Activated CD4-positive, alpha-beta memory T cell treated with anti-CD3 and anti-CD28 coated beads, Interleukin-2, amount 10 ng/mL, durations not matched to agents 7 days and 5 days (primary cell): ENCODE measurements at regions of chr11 and their contacts with region 1.

Region 1: DNA sequence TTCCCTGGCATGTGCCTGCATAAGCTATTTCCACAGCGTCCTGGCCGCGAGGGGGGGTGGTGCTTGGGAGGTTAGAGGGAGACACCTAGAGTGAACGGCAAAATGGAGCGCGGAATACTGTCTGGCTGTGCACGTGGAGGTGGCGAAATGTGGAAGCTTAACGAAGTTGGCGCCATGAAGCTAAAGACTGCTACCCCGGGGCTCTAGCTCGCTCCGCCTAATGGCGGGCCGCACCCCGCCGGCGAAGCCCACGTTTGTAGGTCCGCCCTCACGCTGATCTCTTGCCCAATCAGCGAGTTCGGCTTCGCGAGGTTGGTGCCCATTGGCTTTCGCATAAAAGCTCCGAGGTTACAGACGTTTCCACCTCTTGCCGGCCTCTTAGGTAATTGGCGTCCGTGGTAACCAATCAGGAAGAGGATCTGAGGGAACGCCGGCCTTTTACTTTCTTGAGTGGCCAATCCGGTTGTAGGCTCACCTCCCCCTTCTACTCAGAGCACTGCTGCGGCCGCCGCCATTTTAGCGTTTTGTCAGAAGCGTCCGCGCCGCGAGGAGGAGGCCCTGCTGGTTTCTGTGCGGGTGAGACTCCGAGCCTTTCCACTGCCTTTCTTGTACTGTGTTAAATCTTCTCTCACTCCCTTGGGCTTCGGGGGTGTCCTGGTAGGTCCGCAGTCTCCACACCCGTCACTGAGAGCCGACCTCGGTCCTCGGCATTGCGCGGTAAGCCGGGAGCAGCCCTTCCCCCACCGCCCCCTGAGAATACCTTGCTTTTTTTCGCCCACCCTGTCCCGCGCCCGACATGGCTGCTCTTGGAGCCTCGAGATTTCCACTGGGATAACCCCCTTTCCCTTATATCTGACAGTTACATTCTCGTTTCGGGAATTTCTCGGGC is at the start of gene RBM4:
- DNase-seq: peak; percentile 98
- H3K4me3 Mint-ChIP-seq: peak within 1 kb of the TSS; percentile 91
- H3K27ac Mint-ChIP-seq: peak within 1 kb of the TSS; percentile 91
- H3K4me1 Mint-ChIP-seq: peaks cover 60% of the 10 kb centered on the region
- H3K27me3 Mint-ChIP-seq: no peaks in the 10 kb centered on the region
- total RNA-seq, gene RBM4: 109 to 110 TPM

Region 2: DNA sequence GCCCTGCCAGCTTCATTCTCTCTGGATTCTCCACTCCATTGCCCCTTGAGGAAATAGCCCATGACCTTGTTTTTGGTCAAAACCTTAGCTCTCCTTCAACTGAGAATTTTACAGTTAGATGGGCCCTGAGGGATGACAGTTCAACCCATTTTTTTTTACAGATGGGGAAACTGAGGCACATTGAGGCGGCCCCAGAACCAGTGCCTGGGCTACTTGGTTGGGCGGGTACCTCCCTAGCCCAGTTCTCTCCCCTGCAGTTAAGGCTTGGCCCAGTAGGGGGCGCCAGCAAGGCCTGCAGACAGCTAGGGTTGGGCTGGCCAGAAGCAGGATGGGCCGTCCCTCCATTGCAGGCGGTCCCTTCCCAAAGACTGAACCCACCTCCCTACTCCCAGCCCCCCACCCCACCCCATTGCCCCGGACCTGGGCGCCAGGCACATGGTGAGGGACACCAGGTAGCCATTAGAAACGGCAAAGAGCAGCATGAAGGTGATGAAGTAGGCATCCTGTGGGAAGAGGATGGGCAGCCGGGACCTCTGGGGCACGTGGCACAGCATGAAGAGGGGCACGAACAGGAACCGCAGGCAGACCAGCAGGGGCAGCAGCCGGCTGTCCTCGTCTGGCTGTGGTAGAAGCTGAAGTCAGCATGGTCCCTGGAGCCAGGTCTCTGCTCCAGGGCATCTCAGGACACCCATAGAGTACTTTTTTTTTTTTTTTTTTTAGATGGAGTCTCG is 274.5 kb before region 1 on chr11:
- CTCF ChIA-PET with region 1: no interaction called
- POLR2A ChIA-PET with region 1: no interaction called
- DNase-seq: peak; percentile 76
- H3K4me3 Mint-ChIP-seq: no peak overlapping the region
- H3K27ac Mint-ChIP-seq: no peak overlapping the region
- H3K4me1 Mint-ChIP-seq: no peaks in the 10 kb centered on the region
- H3K27me3 Mint-ChIP-seq: no peaks in the 10 kb centered on the region

Region 3: DNA sequence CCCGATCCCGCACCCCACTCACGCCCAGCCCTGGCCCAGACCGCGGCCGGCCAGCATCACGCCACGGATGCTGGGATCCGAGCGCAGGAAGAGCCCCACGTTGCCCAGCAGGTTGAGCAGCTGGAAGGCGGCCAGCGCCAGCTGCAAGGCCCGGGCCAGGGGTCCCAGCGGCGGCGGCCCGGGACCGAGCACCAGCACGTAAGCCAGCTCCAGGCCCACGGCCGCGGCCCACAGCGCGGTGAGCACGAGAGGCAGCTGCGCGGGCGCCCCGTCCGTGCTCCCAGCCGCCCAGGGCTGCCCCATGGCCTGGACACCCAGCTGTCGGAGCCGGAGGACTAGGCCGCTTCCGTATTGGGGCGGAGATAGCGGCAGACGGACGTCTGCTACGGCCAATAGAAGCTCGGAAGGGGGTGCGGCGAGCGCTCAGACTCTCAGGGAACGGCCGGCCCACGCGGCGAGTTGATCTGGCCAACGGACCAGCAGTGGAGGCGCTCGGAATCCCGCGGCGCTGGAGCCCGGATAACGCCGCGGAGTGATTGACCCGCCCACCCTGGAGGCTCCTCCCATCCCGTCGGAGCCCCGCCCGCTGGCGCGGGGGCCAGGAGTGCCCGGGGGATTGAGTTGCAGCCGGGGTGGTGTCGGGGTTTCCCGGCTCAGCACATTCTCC is 92.6 kb before region 1 on chr11 and contains the start of gene ZDHHC24:
- CTCF ChIA-PET with region 1: no interaction called
- POLR2A ChIA-PET with region 1: interaction called, 23 read pairs
- DNase-seq: peak; percentile 93
- H3K4me3 Mint-ChIP-seq: peak within 1 kb of the TSS; percentile 79
- H3K27ac Mint-ChIP-seq: peak within 1 kb of the TSS; percentile 71
- H3K4me1 Mint-ChIP-seq: peaks cover 40% of the 10 kb centered on the region
- H3K27me3 Mint-ChIP-seq: peaks cover 13% of the 10 kb centered on the region
- total RNA-seq, gene ZDHHC24: 25.9 to 26.0 TPM

Region 4: GRCh38 chr11:66616379-66617154 is 21.9 kb before region 1 on chr11 and contains the start of gene RBM14:
- CTCF ChIA-PET with region 1: interaction called, 18 read pairs
- POLR2A ChIA-PET with region 1: interaction called, 125 read pairs
- DNase-seq: peak; percentile 98
- H3K4me3 Mint-ChIP-seq: peak within 1 kb of the TSS; percentile 97
- H3K27ac Mint-ChIP-seq: peak within 1 kb of the TSS; percentile 98
- H3K4me1 Mint-ChIP-seq: peaks cover 43% of the 10 kb centered on the region
- H3K27me3 Mint-ChIP-seq: no peaks in the 10 kb centered on the region
- total RNA-seq, gene RBM14: 116 to 120 TPM

Region 5: GRCh38 chr11:66651016-66651415 is 12.6 kb after region 1 on chr11:
- CTCF ChIA-PET with region 1: interaction called, 9 read pairs
- POLR2A ChIA-PET with region 1: interaction called, 45 read pairs
- DNase-seq: no peak
- H3K4me3 Mint-ChIP-seq: no peak overlapping the region
- H3K27ac Mint-ChIP-seq: no peak overlapping the region
- H3K4me1 Mint-ChIP-seq: peaks cover 27% of the 10 kb centered on the region
- H3K27me3 Mint-ChIP-seq: no peaks in the 10 kb centered on the region

Region 6: GRCh38 chr11:66686801-66687750 is 48.7 kb after region 1 on chr11:
- CTCF ChIA-PET with region 1: no interaction called
- POLR2A ChIA-PET with region 1: no interaction called
- DNase-seq: no peak
- H3K4me3 Mint-ChIP-seq: no peak overlapping the region
- H3K27ac Mint-ChIP-seq: no peak overlapping the region
- H3K4me1 Mint-ChIP-seq: no peaks in the 10 kb centered on the region
- H3K27me3 Mint-ChIP-seq: peaks cover 3% of the 10 kb centered on the region

Region 7: DNA sequence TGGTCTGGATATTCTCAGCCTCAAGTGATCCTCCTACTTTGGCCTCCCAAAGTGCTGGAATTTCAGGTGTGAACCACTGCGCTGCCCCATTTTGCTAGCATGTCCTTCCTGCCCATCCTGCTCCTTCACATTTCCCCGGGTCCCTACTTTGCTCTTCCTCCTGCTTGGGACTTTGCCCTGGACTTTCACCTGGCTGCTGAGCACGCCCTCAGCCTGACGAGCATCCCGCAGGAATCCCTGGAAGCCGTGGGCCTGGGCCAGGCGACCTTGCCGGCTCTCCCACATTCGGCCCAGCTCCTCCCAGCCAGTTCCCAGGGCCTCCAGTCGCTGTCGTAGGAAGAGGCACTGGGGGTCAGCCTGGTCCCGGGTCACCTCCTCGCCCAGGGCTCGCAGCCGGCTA is 61.9 kb after region 1 on chr11:
- CTCF ChIA-PET with region 1: no interaction called
- POLR2A ChIA-PET with region 1: no interaction called
- DNase-seq: no peak
- H3K4me3 Mint-ChIP-seq: no peak overlapping the region
- H3K27ac Mint-ChIP-seq: no peak overlapping the region
- H3K4me1 Mint-ChIP-seq: peaks cover 2% of the 10 kb centered on the region
- H3K27me3 Mint-ChIP-seq: no peaks in the 10 kb centered on the region

Region 8: GRCh38 chr11:66842896-66843775 is 204.7 kb after region 1 on chr11 and contains the start of gene RCE1:
- CTCF ChIA-PET with region 1: no interaction called
- POLR2A ChIA-PET with region 1: interaction called, 14 read pairs
- DNase-seq: peak; percentile 93
- H3K4me3 Mint-ChIP-seq: peak within 1 kb of the TSS; percentile 93
- H3K27ac Mint-ChIP-seq: peak within 1 kb of the TSS; percentile 93
- H3K4me1 Mint-ChIP-seq: peaks cover 58% of the 10 kb centered on the region
- H3K27me3 Mint-ChIP-seq: no peaks in the 10 kb centered on the region
- total RNA-seq, gene RCE1: 21.2 to 22.0 TPM